WTC11 (cell line): ENCODE measurements at regions of chr6 and their contacts with region 1.

Region 1: DNA sequence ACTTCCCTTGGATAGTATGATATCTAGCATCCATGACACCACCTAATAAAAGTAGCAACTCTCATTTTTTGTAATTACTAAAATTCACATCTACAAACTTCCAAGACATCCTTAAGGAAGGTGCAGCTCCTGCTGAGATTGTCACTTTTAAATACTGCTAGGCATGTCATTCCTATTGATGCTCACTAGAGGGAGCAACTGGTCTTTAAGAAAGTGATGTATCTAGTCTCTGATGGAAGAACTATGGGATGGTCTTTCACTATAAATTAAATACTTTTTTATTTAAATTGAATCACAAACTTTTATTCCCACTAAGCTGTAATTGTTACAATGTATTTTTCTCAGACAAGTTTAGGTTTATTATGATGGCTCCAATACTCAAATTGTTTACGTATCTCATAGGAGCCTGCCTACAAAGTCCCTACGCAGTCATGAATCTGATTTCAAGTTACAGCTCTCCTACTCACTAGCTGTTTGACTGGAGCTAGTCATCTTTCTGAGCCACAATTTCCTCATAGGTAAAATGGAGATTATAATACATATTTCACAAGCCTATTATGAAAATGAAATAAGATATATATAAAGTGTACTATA is 8.1 kb upstream of the TSPYL1 start:
- DNase-seq: no peak
- ATAC-seq: peak; percentile 93
- H3K4me3 Mint-ChIP-seq: no peak overlapping the region
- H3K27ac Mint-ChIP-seq: no peak overlapping the region
- H3K4me1 Mint-ChIP-seq: peaks cover 6% of the 10 kb centered on the region
- H3K27me3 Mint-ChIP-seq: no peaks in the 10 kb centered on the region
- CTCF ChIP-seq: peak; percentile 91

Region 2: GRCh38 chr6:116316772-116317467 is 29.1 kb after region 1 on chr6:
- CTCF ChIA-PET with region 1: interaction called, 24 read pairs
- POLR2A ChIA-PET with region 1: interaction called, 3 read pairs
- DNase-seq: no peak
- ATAC-seq: no peak; the same call in 1 of the 2 replicates
- H3K4me3 Mint-ChIP-seq: no peak overlapping the region
- H3K27ac Mint-ChIP-seq: no peak overlapping the region
- H3K4me1 Mint-ChIP-seq: peaks cover 4% of the 10 kb centered on the region
- H3K27me3 Mint-ChIP-seq: no peaks in the 10 kb centered on the region
- CTCF ChIP-seq: no peak

Region 3: GRCh38 chr6:116371120-116371917 is 83.5 kb after region 1 on chr6:
- CTCF ChIA-PET with region 1: interaction called, 24 read pairs
- POLR2A ChIA-PET with region 1: interaction called, 4 read pairs
- DNase-seq: peak; percentile 84
- ATAC-seq: peak; percentile 66
- H3K4me3 Mint-ChIP-seq: peak overlapping the region; percentile 84
- H3K27ac Mint-ChIP-seq: peak overlapping the region; percentile 90
- H3K4me1 Mint-ChIP-seq: peaks cover 58% of the 10 kb centered on the region
- H3K27me3 Mint-ChIP-seq: no peaks in the 10 kb centered on the region
- CTCF ChIP-seq: no peak

Region 4: DNA sequence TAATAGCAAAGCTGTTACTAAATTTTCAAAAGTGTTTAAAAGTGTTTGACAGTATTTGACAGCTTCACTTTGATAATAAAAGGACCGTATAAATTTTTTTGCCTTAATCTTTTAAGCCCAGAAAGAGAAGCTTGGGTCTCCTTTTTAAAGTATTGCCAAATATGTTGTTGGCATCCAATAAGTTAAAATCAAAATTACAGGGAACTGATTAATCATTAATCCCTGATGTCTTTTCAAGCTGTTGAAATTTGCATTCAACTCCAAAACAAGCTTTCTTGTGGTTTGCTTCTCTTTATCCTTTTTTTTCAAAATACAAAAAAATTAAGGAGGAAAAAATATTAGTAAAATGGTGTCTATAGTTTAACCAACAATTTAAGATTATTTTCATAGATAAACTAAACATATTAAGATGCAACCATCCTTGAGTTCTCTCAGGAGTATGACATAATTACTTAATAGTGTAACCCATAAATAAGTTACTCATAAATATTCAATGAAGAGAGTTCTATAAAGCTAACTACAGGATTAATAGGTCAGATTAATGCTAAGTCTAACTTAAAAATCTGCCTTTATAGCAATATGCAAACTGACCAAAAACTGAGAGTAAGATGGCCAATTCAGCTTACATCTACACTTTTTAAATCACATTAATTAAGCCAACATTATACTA is 146.4 kb after region 1 on chr6:
- CTCF ChIA-PET with region 1: interaction called, 29 read pairs
- POLR2A ChIA-PET with region 1: no interaction called
- DNase-seq: no peak
- ATAC-seq: no peak
- H3K4me3 Mint-ChIP-seq: no peak overlapping the region
- H3K27ac Mint-ChIP-seq: no peak overlapping the region
- H3K4me1 Mint-ChIP-seq: peaks cover 37% of the 10 kb centered on the region
- H3K27me3 Mint-ChIP-seq: no peaks in the 10 kb centered on the region
- CTCF ChIP-seq: no peak

Region 5: GRCh38 chr6:116531675-116532570 is 244.1 kb after region 1 on chr6:
- CTCF ChIA-PET with region 1: interaction called, 65 read pairs
- POLR2A ChIA-PET with region 1: no interaction called
- DNase-seq: peak; percentile 79
- ATAC-seq: peak; percentile 75
- H3K4me3 Mint-ChIP-seq: no peak overlapping the region
- H3K27ac Mint-ChIP-seq: no peak overlapping the region
- H3K4me1 Mint-ChIP-seq: peaks cover 49% of the 10 kb centered on the region
- H3K27me3 Mint-ChIP-seq: no peaks in the 10 kb centered on the region
- CTCF ChIP-seq: peak; percentile 55